Transverse colon (tissue), 4 donors: ENCODE measurements at regions of chr1 and their contacts with region 1.

Region 1: GRCh38 chr1:178931858-178932551 is 61.1 kb upstream of the ANGPTL1 start:
- DNase-seq: peak; percentile 63
- H3K4me3 ChIP-seq: no peak overlapping the region
- H3K27ac ChIP-seq: peak overlapping the region; percentile 82 to 92 (median 84)
- H3K4me1 ChIP-seq: peaks cover 12 to 67% (median 25%) of the 10 kb centered on the region in 4 donors
- H3K27me3 ChIP-seq: no peaks in the 10 kb centered on the region
- CTCF ChIP-seq: no peak
- EP300 ChIP-seq: peak; percentile 96
- POLR2A ChIP-seq: peak; percentile 20

Region 2: GRCh38 chr1:178870944-178871343 is 61.1 kb before region 1 on chr1 and contains the start of gene ANGPTL1:
- in situ Hi-C with region 1: no loop called
- intact Hi-C with region 1: loop called (anchors 5 kb)
- DNase-seq: no peak
- H3K4me3 ChIP-seq: peak within 1 kb of the TSS; percentile 7 to 45 (median 22)
- H3K27ac ChIP-seq: peak within 1 kb of the TSS; percentile 73 to 84 (median 80)
- H3K4me1 ChIP-seq: peaks cover 10 to 42% (median 29%) of the 10 kb centered on the region in 4 donors
- H3K27me3 ChIP-seq: no peaks in the 10 kb centered on the region
- CTCF ChIP-seq: no peak
- EP300 ChIP-seq: no peak
- POLR2A ChIP-seq: peak; percentile 29
- total RNA-seq, gene ANGPTL1: 10.8 to 29.2 (median 18.0) TPM

Region 3: GRCh38 chr1:178881950-178882349 is 50.1 kb before region 1 on chr1:
- in situ Hi-C with region 1: no loop called
- intact Hi-C with region 1: no loop called
- DNase-seq: no peak
- H3K4me3 ChIP-seq: no peak overlapping the region
- H3K27ac ChIP-seq: no peak overlapping the region
- H3K4me1 ChIP-seq: no peaks in the 10 kb centered on the region
- H3K27me3 ChIP-seq: no peaks in the 10 kb centered on the region
- CTCF ChIP-seq: no peak
- EP300 ChIP-seq: no peak
- POLR2A ChIP-seq: no peak